ENCODE measurements at regions of chr13 and their contacts with region 1.

Region 1: DNA sequence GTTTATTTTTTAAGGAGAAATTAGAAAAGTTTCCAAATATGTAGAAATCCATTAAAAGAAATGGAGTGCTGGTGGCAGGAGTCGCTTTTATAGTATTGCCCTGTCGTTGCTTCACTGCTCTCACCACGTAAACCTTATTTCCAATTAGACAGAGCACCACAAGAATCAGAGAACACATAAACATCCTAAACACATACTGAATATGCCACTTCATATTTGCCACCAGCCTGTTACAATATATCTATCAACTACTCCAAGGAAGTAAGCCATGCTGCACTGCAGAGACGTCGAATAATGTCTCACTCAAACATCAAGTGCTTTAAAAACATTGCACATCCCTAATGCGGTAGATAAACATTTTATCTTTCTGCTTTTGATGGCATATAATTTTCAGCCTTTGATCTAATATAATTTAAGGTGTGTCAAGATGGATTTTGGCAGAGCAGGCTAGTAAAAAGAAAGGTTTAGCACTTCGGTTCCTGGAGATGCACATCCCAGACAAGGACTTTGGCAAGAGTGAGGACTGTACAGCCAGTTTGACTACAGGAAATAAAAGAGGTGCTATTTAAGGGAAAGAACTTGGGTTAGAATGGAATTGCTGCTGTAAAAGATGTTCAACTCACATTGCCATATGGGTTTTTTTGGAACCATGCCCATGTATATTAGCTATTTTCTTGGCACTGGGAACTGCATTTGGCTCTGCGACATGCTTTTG is 932.3 kb downstream of the EFNB2 start:
- DNase-seq: no peak
- ATAC-seq: no peak
- H3K4me3 ChIP-seq: no peak overlapping the region
- H3K27ac ChIP-seq: no peak overlapping the region
- H3K4me1 ChIP-seq: no peaks in the 10 kb centered on the region
- H3K27me3 ChIP-seq: no peaks in the 10 kb centered on the region
- CTCF ChIP-seq: no peak

Region 2: DNA sequence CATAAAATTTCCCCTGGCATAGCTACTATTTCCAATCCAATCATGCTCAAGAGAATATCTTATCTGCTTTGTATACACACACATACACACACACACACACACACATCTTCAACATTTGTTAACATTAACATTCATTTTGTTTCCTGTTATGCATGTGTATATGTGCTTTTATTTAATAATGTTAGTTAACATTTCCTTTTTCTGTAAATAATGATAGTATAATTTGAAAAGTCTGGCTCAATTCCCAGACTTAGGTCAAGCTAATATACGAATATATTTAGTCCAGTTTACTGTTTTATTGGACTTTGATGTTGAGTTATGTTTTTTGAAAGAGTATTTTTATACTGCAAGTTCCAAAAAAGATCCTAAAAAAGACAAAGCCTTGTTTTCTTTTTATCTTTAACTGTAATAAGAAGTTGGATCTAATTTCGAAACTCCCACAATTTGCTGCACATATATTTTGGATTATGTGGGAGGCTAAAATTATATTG is 140.1 kb before region 1 on chr13:
- CTCF ChIA-PET with region 1: no interaction called
- POLR2A ChIA-PET with region 1: no interaction called
- intact Hi-C with region 1: loop called (anchors 10 kb)
- DNase-seq: peak; percentile 32
- ATAC-seq: peak; percentile 48
- H3K4me3 ChIP-seq: no peak overlapping the region
- H3K27ac ChIP-seq: no peak overlapping the region
- H3K4me1 ChIP-seq: no peaks in the 10 kb centered on the region; the same call in 1 of the 2 replicates
- H3K27me3 ChIP-seq: no peaks in the 10 kb centered on the region
- CTCF ChIP-seq: no peak

Measured in PC-3 (cell line).